Ascending aorta (tissue), 2 donors: ENCODE measurements at regions of chr20 and their contacts with region 1.

Region 1: GRCh38 chr20:45971675-45972499 is at the start of gene ZNF335:
- DNase-seq: peak; percentile 76 to 97
- H3K4me3 ChIP-seq: peak within 1 kb of the TSS; percentile 73 to 99
- H3K27ac ChIP-seq: peak within 1 kb of the TSS; percentile 99
- H3K4me1 ChIP-seq: peaks cover 3 to 30% of the 10 kb centered on the region in 2 donors
- H3K27me3 ChIP-seq: no peaks in the 10 kb centered on the region
- CTCF ChIP-seq: peak; percentile 37 to 48 (median 45)
- total RNA-seq, gene ZNF335: 27.8 TPM

Region 2: GRCh38 chr20:45792332-45792686 is 179.6 kb before region 1 on chr20:
- intact Hi-C with region 1: loop called (anchors 5 kb)
- DNase-seq: no peak
- H3K4me3 ChIP-seq: peak overlapping the region; percentile 79 to 89
- H3K27ac ChIP-seq: peak overlapping the region; percentile 94
- H3K4me1 ChIP-seq: peaks cover 4% of the 10 kb centered on the region in 2 donors
- H3K27me3 ChIP-seq: no peaks in the 10 kb centered on the region
- CTCF ChIP-seq: no peak

Region 3: GRCh38 chr20:45880988-45881788 is 90.7 kb before region 1 on chr20 and contains the start of gene ZSWIM1:
- intact Hi-C with region 1: loop called (anchors 1 kb)
- DNase-seq: peak; percentile 99 to 100
- H3K4me3 ChIP-seq: peak within 1 kb of the TSS; percentile 67 to 71
- H3K27ac ChIP-seq: peak within 1 kb of the TSS; percentile 83 to 88
- H3K4me1 ChIP-seq: peaks cover 0 to 14% of the 10 kb centered on the region in 2 donors
- H3K27me3 ChIP-seq: no peaks in the 10 kb centered on the region
- CTCF ChIP-seq: no peak
- total RNA-seq, gene ZSWIM1: 3.5 TPM

Region 4: DNA sequence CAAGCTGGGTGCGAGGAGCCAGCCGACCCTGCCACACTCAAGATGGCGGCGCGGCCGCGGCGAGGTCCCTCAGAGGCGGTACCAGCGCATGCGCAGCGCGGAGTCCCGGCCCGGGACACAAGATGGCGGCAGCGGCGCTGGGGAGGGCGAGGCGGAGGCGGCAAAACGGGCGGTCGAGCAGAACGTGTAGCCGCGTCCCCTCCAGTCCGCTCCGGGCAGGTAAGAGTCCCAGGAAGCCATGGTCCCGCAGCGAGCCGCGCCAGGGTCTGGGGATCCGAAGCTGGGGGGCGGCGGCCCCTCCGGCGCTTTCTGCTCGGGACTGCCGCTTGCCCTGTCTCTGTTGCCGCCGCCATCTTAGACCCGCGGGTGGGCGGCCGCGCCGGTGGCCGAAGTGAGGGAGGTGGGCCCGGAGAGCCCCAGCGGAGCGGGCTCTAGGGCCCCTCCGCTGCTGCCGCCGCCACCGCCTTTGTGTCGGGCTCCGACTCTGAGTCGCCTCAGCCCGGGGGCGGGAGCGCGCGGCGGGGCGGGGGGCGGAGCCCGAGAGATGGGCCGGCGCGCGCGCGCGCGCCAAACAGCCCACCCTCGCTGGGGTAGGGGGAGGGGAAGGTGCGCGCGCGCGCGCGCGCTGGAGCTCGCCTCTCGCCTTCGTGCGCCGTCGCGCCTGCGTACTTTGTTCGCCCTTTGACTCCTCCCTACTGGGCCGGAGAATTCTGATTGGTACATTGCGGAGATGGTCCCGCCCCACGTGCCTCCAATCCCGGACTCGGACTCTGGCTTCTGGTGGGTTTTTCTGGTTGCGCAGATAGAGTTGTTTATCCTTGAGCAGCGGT is 37.1 kb before region 1 on chr20 and contains the start of gene PCIF1:
- intact Hi-C with region 1: loop called (anchors 1 kb)
- DNase-seq: peak; percentile 92 to 99
- H3K4me3 ChIP-seq: peak within 1 kb of the TSS; percentile 73 to 95
- H3K27ac ChIP-seq: peak within 1 kb of the TSS; percentile 98 to 100
- H3K4me1 ChIP-seq: peaks cover 5 to 16% of the 10 kb centered on the region in 2 donors
- H3K27me3 ChIP-seq: no peaks in the 10 kb centered on the region
- CTCF ChIP-seq: no peak
- total RNA-seq, gene PCIF1: 45.7 TPM

Region 5: DNA sequence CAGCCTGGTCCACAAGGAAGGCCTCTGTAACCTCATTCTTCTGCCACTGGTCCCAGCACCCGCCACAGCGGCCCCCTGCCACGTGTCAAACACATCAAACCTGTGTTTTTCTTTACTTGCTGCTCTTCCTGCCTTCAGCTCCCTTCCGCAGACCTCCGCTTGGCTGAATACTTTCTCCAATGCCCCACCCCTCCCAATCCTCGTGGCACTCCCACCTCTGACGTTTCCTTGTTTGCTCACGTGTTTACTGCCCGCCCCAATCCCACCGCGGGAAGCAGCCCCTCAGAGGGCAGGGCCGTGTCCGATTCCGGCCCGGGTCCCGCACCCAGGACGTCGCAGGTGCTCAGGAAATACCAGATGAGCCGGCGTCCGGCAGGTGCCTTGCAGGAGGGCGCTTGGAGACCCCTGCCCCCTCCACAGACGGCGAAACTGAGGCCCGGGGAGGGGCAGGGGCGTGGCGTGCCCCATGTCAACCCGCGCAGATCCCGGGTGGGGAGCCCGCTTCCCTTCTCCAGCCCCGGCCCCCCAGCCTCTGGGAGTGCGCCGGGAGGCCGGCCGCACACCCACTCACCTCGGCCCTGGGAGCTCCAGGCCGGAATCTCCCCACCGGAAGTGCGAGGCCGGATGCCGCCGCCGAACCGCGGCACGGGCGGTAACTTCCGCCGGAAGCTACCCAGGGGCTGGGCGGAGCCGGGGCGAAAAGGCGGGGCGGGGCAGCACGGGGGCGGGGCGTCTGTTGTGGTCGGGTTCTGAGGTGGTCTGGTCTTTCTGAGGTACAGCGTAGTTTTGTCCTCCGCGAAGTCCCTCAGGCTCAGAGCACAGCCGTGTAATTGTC is 392.1 kb after region 1 on chr20:
- intact Hi-C with region 1: loop called (anchors 2 kb)
- DNase-seq: peak; percentile 65 to 93
- H3K4me3 ChIP-seq: peak overlapping the region; percentile 100
- H3K27ac ChIP-seq: peak overlapping the region; percentile 99 to 100
- H3K4me1 ChIP-seq: peaks cover 9 to 24% of the 10 kb centered on the region in 2 donors
- H3K27me3 ChIP-seq: no peaks in the 10 kb centered on the region
- CTCF ChIP-seq: no peak

Region 6: DNA sequence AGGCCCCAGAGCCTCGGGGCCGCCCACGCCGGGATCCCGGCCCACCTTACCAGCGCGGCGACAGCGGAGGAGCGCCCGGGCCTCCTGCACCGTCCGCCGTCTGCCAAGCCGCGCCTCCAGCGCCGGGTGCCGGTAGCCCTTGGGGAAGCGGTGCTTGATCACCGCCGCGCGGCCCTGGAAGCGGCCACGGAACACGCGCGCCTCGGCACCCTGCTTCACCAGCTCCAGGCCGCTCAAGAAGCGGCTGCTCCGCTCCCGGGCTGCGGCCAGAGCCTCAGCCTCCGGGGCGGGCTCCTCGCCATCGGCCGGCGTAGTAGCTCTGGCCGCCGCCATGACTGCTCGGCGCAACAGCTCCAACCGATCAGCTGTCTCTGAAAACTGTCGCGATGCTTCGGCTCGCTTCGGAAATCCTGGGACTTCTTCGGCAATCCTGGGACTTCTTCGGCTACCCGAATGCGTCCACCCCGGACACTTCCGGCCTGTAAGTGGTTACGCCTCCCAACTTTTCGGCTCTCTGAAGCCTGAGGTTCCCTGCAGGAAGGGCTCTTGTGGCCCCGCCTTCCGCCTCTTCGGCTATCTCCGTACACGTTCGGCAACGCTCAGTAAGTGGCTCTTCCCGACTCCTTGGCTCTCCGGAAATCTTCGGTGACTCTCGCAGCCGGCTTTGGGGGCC is 717.3 kb after region 1 on chr20 and contains the start of gene TP53RK:
- intact Hi-C with region 1: loop called (anchors 5 kb)
- DNase-seq: peak; percentile 98 to 99
- H3K4me3 ChIP-seq: peak within 1 kb of the TSS; percentile 66 to 69
- H3K27ac ChIP-seq: peak within 1 kb of the TSS; percentile 84 to 89
- H3K4me1 ChIP-seq: peaks cover 9 to 14% of the 10 kb centered on the region in 2 donors
- H3K27me3 ChIP-seq: no peaks in the 10 kb centered on the region
- CTCF ChIP-seq: peak; percentile 38 to 62 (median 41)
- total RNA-seq, gene TP53RK: 30.8 TPM